Activated CD8-positive, alpha-beta T cell treated with anti-CD3 and anti-CD28 coated beads for 36 hours (primary cell): ENCODE measurements at regions of chr10 and their contacts with region 1.

Region 1: DNA sequence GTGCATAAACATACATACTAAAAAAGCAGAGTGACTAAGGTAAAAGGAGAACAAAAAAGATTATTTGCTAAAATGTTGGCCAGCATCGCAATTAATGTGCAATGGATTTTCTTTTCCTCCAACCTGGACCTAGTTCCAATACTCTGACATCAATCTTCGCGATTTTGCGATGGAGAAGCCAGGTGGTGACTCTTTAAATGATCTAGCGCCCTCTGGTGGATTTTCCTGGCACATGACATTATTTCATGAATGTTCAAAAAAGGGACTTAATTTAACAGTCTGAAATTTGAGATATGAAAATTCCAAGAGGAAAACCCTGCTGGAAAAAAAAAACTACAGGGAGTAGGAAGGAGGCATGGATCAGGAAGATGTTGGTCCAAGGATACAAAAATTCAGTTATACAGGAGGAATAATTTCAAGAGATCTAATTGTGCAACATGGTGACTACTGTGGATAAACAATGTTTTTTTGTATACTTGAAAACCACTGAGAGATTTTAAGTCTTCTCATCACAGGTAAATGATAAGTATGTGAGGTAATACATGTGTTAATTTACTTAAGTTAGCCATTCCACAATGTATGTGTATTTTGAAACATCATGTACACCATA is 4.3 kb upstream of the KCNMA1 start:
- DNase-seq: peak; percentile 76
- ATAC-seq: no peak
- H3K4me3 Mint-ChIP-seq: no peak overlapping the region
- H3K27ac Mint-ChIP-seq: no peak overlapping the region
- H3K4me1 Mint-ChIP-seq: peaks cover 4% of the 10 kb centered on the region
- H3K27me3 Mint-ChIP-seq: peaks cover 36% of the 10 kb centered on the region
- CTCF ChIP-seq: peak; percentile 80

Region 2: DNA sequence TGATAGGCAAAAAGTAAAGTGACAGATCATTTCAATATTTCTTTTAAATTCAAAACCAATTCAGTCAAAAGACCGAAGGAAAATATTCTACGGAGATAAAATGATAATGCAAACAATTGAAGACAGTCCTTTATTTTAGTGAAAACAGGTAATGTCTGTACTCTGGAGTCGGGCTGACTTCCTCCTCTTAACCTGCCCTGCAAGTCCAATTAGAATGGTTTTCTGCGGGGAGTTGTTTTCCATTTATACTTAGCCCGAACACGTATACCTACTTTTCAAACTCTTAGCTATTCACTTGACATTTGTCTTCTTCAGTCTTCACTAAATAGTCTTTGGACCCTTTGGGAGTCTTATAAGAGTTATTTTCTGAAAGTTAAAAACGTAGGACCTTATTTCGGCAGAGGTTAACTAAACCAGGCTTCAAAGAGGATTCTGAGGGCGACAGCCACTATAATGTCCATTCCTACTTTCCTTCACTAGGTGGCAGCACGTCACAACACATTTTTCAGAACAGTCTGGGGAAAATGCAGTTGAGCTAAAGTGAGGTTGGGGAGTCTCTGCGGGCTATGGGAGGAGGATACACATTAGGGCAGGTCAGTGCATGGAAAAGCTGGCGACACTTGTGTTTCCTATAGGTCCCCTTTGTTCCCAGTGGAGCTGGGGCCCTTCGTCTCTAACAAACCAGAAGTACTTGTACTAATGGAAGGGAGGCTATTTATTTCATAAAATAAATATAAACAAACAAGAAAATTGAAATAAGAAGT is 476.3 kb before region 1 on chr10:
- CTCF ChIA-PET with region 1: interaction called, 161 read pairs
- POLR2A ChIA-PET with region 1: no interaction called
- intact Hi-C with region 1: loop called (anchors 2 kb)
- DNase-seq: peak; percentile 49
- ATAC-seq: peak; percentile 70
- H3K4me3 Mint-ChIP-seq: no peak overlapping the region
- H3K27ac Mint-ChIP-seq: no peak overlapping the region
- H3K4me1 Mint-ChIP-seq: no peaks in the 10 kb centered on the region
- H3K27me3 Mint-ChIP-seq: peaks cover 24% of the 10 kb centered on the region
- CTCF ChIP-seq: peak; percentile 76

Region 3: DNA sequence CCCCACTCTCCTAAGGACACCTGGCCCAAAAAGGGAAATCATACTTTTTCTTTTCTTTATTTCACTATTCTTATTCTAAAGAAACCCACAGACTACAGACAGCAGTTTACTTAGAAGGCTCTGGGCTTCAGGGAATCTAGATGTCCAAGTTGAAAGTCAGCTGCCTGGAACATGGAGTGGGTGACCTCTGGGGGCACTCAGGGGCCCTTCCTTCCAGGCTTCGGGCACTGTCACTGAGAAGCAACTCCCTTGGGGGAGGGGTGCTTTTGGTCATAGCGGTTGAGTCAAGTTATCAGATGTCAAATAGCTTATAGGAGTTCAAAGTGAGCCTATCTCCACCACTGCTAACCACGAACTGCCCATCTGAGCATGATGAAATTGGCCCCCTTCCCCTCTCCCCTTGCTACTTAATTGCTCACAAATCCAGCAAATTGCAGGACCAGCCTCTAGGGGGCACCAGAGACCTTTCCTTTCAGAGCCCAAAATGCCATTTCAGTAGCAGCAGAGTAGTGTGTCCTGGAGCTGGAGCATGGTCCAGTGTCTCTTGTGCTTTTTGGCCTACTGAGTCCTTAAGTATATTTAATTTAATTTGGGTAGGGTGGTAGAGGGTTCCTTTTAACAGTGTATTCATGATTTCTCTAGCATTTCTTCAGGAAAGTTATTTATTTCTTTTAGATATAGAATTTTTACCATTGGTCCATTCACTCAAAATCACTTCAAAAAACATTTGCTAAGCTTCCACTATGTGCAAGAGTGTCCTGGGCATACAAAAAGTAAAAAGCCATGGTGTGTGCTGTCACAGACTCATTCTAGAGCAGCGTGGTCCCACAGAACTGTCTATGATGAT is 468.1 kb before region 1 on chr10:
- CTCF ChIA-PET with region 1: interaction called, 161 read pairs
- POLR2A ChIA-PET with region 1: interaction called, 4 read pairs
- intact Hi-C with region 1: loop called (anchors 2 kb)
- DNase-seq: peak; percentile 84
- ATAC-seq: peak; percentile 66
- H3K4me3 Mint-ChIP-seq: no peak overlapping the region
- H3K27ac Mint-ChIP-seq: no peak overlapping the region
- H3K4me1 Mint-ChIP-seq: no peaks in the 10 kb centered on the region
- H3K27me3 Mint-ChIP-seq: peaks cover 1% of the 10 kb centered on the region
- CTCF ChIP-seq: peak; percentile 87

Region 4: GRCh38 chr10:77251297-77252013 is 390.4 kb before region 1 on chr10:
- CTCF ChIA-PET with region 1: interaction called, 14 read pairs
- POLR2A ChIA-PET with region 1: no interaction called
- intact Hi-C with region 1: loop called (anchors 5 kb)
- DNase-seq: peak; percentile 62
- ATAC-seq: peak; percentile 51
- H3K4me3 Mint-ChIP-seq: no peak overlapping the region
- H3K27ac Mint-ChIP-seq: no peak overlapping the region
- H3K4me1 Mint-ChIP-seq: peaks cover 23% of the 10 kb centered on the region
- H3K27me3 Mint-ChIP-seq: no peaks in the 10 kb centered on the region
- CTCF ChIP-seq: peak; percentile 67

Region 5: DNA sequence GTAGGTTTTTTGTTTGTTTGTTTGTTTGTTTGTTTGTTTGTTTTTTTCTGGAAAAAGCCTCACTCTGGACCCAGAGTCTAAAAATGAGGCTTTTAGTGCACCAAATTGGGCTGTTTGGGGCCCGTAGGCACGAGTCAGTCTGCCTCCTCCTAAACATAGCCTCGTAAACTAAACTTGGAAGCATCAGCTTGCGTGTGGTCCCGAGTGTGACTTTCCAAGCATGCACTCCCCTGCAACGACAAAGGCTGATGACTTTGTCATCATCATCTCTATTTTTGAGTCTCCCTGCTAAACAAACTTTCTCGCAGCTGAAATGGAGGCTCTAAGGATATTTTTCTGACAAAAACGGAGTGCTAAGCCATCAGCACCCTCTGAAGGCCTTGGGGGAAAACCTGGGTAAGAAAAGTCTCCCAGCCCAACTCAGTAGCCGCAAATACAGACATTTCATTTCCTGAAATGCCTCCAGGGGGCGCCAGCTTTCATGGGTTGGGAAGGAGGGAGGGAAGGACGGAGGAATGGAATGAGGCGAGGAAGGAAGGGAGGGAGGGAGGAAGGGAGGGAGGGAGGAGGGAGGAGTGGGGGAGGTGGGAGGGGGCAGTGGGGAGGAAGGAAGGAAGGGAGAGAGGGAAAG is 250.2 kb before region 1 on chr10:
- CTCF ChIA-PET with region 1: interaction called, 5 read pairs
- POLR2A ChIA-PET with region 1: no interaction called
- intact Hi-C with region 1: loop called (anchors 5 kb)
- DNase-seq: peak; percentile 57
- ATAC-seq: no peak
- H3K4me3 Mint-ChIP-seq: no peak overlapping the region
- H3K27ac Mint-ChIP-seq: no peak overlapping the region
- H3K4me1 Mint-ChIP-seq: peaks cover 7% of the 10 kb centered on the region
- H3K27me3 Mint-ChIP-seq: no peaks in the 10 kb centered on the region
- CTCF ChIP-seq: no peak

Region 6: GRCh38 chr10:77726732-77727131 is 84.8 kb after region 1 on chr10:
- CTCF ChIA-PET with region 1: no interaction called
- POLR2A ChIA-PET with region 1: no interaction called
- intact Hi-C with region 1: no loop called
- DNase-seq: no peak
- ATAC-seq: no peak
- H3K4me3 Mint-ChIP-seq: no peak overlapping the region
- H3K27ac Mint-ChIP-seq: no peak overlapping the region
- H3K4me1 Mint-ChIP-seq: no peaks in the 10 kb centered on the region
- H3K27me3 Mint-ChIP-seq: peaks cover 2% of the 10 kb centered on the region
- CTCF ChIP-seq: no peak

Region 7: GRCh38 chr10:77801474-77802161 is 159.7 kb after region 1 on chr10:
- CTCF ChIA-PET with region 1: no interaction called
- POLR2A ChIA-PET with region 1: no interaction called
- intact Hi-C with region 1: no loop called
- DNase-seq: peak; percentile 89
- ATAC-seq: peak; percentile 96
- H3K4me3 Mint-ChIP-seq: no peak overlapping the region
- H3K27ac Mint-ChIP-seq: peak overlapping the region; percentile 64
- H3K4me1 Mint-ChIP-seq: peaks cover 22% of the 10 kb centered on the region
- H3K27me3 Mint-ChIP-seq: peaks cover 11% of the 10 kb centered on the region
- CTCF ChIP-seq: no peak